Aorta (tissue), 5 donors: ENCODE measurements at regions of chr1 and their contacts with region 1.

Region 1: GRCh38 chr1:115198938-115199337 is 109.6 kb upstream of the TSPAN2 start:
- DNase-seq: no peak
- ATAC-seq: no peak
- H3K4me3 ChIP-seq: no peak overlapping the region
- H3K27ac ChIP-seq: no peak overlapping the region
- H3K4me1 ChIP-seq: peaks cover 3% of the 10 kb centered on the region in 2 donors
- H3K27me3 ChIP-seq: no peaks in the 10 kb centered on the region

Region 2: DNA sequence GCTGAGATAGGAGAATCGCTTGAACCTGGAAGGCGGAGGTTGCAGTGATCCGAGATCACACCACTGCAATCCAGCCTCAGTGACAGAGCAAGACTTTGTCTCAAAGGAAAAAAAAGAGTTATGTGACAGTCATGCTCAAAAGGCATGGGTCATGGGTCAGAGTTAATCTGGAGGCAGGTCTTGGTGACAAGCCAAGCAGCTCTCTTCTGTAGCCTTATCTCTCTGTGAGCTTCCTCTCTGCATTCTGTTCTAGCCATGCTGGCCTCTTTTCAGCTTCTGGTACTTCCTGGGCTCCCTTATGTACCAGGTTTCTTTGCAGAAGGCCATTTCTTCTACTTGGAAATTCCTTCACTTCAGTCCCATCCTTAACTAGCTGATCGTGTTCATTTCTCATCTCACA is 75.5 kb after region 1 on chr1:
- intact Hi-C with region 1: loop called in 1 of 2 experiments (anchors 5 kb)
- DNase-seq: no peak
- ATAC-seq: no peak
- H3K4me3 ChIP-seq: no peak overlapping the region
- H3K27ac ChIP-seq: peak overlapping the region in 1 of 2 donors; percentile 46
- H3K4me1 ChIP-seq: no peaks in the 10 kb centered on the region
- H3K27me3 ChIP-seq: no peaks in the 10 kb centered on the region

Region 3: GRCh38 chr1:115479055-115479482 is 280.1 kb after region 1 on chr1:
- intact Hi-C with region 1: no loop called
- DNase-seq: peak in 1 of 2 donors; percentile 53
- ATAC-seq: no peak
- H3K4me3 ChIP-seq: no peak overlapping the region
- H3K27ac ChIP-seq: no peak overlapping the region
- H3K4me1 ChIP-seq: no peaks in the 10 kb centered on the region
- H3K27me3 ChIP-seq: no peaks in the 10 kb centered on the region